ENCODE measurements at regions of chr11 and their contacts with region 1.

Region 1: GRCh38 chr11:33161120-33162005 is at the start of gene CSTF3:
- DNase-seq: peak; percentile 100
- ATAC-seq: peak; percentile 100
- H3K4me3 ChIP-seq: peak within 1 kb of the TSS; percentile 45 to 71
- H3K27ac ChIP-seq: peak within 1 kb of the TSS in 1 of 2 donors; percentile 30
- H3K4me1 ChIP-seq: peaks cover 1 to 3% of the 10 kb centered on the region in 2 donors
- H3K27me3 ChIP-seq: no peaks in the 10 kb centered on the region
- total RNA-seq, gene CSTF3: 19.8 to 21.1 TPM

Region 2: GRCh38 chr11:32583459-32584271 is 577.7 kb before region 1 on chr11 and contains the start of gene EIF3M:
- intact Hi-C with region 1: loop called in 1 of 2 experiments (anchors 5 kb)
- DNase-seq: peak; percentile 98 to 99
- ATAC-seq: peak; percentile 100
- H3K4me3 ChIP-seq: peak within 1 kb of the TSS; percentile 65 to 77
- H3K27ac ChIP-seq: peak within 1 kb of the TSS in 1 of 2 donors; percentile 72
- H3K4me1 ChIP-seq: peaks cover 0 to 3% of the 10 kb centered on the region in 2 donors
- H3K27me3 ChIP-seq: no peaks in the 10 kb centered on the region
- total RNA-seq, gene EIF3M: 136 to 140 TPM

Region 3: GRCh38 chr11:32947978-32948377 is 213.4 kb before region 1 on chr11:
- intact Hi-C with region 1: no loop called
- DNase-seq: no peak
- ATAC-seq: no peak
- H3K4me3 ChIP-seq: no peak overlapping the region
- H3K27ac ChIP-seq: no peak overlapping the region
- H3K4me1 ChIP-seq: no peaks in the 10 kb centered on the region
- H3K27me3 ChIP-seq: no peaks in the 10 kb centered on the region

Region 4: GRCh38 chr11:32972781-32973180 is 188.6 kb before region 1 on chr11:
- intact Hi-C with region 1: no loop called
- DNase-seq: no peak
- ATAC-seq: no peak
- H3K4me3 ChIP-seq: no peak overlapping the region
- H3K27ac ChIP-seq: no peak overlapping the region
- H3K4me1 ChIP-seq: no peaks in the 10 kb centered on the region
- H3K27me3 ChIP-seq: no peaks in the 10 kb centered on the region

Region 5: DNA sequence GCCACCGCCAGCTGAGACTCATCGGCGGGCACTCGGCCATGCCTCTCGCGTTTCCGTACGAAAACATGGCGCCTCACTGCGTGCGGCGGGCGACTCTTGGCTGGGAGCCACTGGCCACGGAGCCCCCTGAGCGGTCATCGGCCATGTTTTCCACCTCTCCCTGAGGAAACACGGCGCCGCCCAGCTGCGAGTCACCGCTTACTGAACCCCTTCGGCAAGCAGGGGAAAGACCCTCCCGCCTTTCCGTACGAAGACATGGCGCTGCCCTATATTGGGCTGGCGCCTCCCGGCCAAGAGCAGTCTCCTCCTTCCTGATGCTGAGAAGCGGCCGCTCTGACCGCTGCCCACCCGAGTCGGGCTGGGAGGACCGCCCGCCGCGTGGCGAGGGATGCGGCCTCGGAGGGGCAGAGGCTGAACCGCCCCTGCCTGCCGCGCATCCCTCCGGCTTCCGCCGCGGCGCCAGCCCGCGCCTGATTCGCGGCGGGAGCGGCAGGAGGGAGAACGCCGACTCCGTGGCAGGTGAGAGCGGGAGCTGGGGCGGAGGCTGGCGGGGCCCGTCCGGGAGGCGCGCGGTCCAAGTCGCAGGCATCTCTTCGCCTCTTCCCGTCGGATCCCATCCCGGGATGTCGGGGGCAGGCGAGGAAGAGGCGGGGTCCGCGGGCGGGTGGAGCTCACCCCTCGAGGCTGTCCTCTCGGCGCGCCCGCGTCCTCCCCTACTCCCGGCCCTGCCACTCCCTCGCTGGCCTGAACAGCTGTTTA is 121.9 kb before region 1 on chr11 and contains the start of gene TCP11L1:
- intact Hi-C with region 1: loop called in 1 of 2 experiments (anchors 10 kb)
- DNase-seq: peak; percentile 96 to 98
- ATAC-seq: peak; percentile 96
- H3K4me3 ChIP-seq: peak within 1 kb of the TSS; percentile 16 to 89
- H3K27ac ChIP-seq: peak within 1 kb of the TSS; percentile 14 to 43
- H3K4me1 ChIP-seq: peaks cover 0 to 8% of the 10 kb centered on the region in 2 donors
- H3K27me3 ChIP-seq: no peaks in the 10 kb centered on the region
- total RNA-seq, gene TCP11L1: 35.2 to 39.4 TPM

Region 6: GRCh38 chr11:33211580-33211979 is 50.2 kb after region 1 on chr11:
- intact Hi-C with region 1: no loop called
- DNase-seq: no peak
- ATAC-seq: no peak
- H3K4me3 ChIP-seq: no peak overlapping the region
- H3K27ac ChIP-seq: no peak overlapping the region
- H3K4me1 ChIP-seq: no peaks in the 10 kb centered on the region
- H3K27me3 ChIP-seq: no peaks in the 10 kb centered on the region

Region 7: DNA sequence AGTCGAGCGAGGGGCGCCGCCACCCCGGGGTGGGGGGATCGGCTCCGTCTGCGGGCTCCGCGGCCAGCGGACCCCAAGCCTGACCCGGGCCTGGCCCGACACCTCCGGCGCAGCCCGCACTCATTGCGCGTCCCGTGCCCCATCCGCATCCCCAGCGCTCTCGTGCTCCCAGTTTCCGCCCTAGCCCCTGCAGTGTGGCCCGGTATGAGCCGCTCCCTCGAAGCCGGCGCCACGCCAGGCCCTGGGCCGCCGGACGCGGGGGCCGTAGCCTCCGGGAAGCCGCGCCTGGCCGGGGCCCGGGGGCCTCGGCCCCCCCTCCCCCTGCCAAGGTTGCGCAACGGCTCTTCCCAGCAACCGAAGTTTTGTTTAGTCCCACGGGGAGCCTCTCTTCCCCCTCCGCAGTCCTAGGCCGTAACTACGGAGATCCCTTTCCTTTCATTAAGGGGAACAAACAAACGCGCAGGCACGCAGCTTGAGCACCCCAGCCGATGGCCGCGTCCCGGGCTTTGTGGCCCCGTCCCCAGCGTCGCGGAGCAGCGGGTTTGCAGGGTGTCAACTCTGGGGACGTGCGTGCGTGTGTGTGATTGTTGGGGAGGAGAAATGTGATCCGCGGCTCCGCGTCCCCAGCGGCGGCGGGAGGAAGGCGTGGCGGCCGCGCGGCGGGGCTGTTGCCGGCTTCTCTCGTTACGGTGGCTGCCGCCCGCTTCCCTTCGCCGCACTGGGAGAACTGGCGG is 96.7 kb after region 1 on chr11:
- intact Hi-C with region 1: loop called (anchors 5 kb)
- DNase-seq: peak; percentile 92 to 96
- ATAC-seq: peak; percentile 94
- H3K4me3 ChIP-seq: peak overlapping the region; percentile 95 to 96
- H3K27ac ChIP-seq: peak overlapping the region; percentile 99 to 100
- H3K4me1 ChIP-seq: peaks cover 2 to 3% of the 10 kb centered on the region in 2 donors
- H3K27me3 ChIP-seq: no peaks in the 10 kb centered on the region

Region 8: GRCh38 chr11:33329705-33330329 is 168.5 kb after region 1 on chr11:
- intact Hi-C with region 1: loop called (anchors 5 kb)
- DNase-seq: no peak
- ATAC-seq: peak; percentile 65
- H3K4me3 ChIP-seq: no peak overlapping the region
- H3K27ac ChIP-seq: no peak overlapping the region
- H3K4me1 ChIP-seq: peaks cover 0 to 9% of the 10 kb centered on the region in 2 donors
- H3K27me3 ChIP-seq: no peaks in the 10 kb centered on the region

Region 9: DNA sequence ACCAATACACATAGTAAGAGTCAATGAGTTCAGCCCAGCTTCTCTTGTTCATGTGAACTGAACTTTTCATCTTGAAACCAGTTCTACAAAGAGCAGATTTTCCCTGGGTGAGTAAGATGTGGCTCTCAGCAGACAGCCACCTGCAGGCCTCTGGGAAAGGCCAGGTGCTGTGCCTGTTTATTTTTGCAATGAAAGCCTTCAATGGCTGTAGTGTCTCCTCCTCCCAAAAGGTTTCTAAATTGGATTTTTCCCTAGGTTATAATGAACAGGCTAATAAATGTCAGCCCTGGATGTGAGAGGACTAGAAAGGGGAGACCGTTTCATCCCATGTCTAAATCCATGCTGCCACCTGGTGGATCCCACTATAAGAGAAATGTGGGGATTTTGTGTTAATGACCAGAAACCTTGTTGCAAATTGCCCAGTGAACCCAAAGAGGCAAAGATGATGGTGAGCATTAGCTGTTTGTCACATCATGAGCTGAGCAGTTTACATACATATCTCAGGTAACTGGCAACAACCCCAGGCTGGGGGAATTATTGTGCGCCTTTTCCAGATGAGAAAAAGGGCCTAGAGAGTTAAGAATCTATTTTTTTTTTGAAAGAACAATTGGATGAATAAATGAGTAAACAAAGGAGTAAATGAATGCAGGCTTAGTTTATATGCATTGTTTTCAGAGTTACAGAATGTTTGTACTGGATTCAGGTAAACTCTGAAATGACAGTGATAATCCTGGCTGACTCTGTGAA is 526.5 kb after region 1 on chr11:
- intact Hi-C with region 1: loop called in 1 of 2 experiments (anchors 5 kb)
- DNase-seq: no peak
- ATAC-seq: no peak
- H3K4me3 ChIP-seq: no peak overlapping the region
- H3K27ac ChIP-seq: no peak overlapping the region
- H3K4me1 ChIP-seq: peaks cover 0 to 3% of the 10 kb centered on the region in 2 donors
- H3K27me3 ChIP-seq: no peaks in the 10 kb centered on the region